ENCODE measurements at regions of chr7 and their contacts with region 1.

Region 1: DNA sequence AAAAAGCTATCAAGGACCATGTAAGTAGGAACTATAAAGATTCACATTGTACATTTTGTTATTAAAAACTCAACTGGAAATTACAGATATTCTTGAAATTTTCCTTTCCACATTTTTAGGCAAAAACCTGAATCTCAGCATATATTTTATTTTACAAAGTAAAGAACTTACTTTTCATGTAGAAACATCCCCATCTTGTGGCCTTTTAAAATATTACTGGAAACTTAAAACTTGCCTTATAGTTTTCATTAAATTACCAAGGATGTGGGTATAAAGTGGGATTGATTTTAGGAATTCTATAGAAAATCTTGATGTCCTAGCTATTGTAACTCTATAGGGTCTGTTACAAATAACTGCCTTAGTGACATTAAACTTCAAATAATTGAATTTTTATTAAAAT is 10.6 kb downstream of the DBF4 start:
- DNase-seq: peak; percentile 56
- ATAC-seq: no peak; the same call in 1 of the 2 replicates
- H3K4me3 ChIP-seq: no peak overlapping the region
- H3K27ac ChIP-seq: no peak overlapping the region
- H3K4me1 ChIP-seq: no peaks in the 10 kb centered on the region
- H3K27me3 ChIP-seq: no peaks in the 10 kb centered on the region
- CTCF ChIP-seq: peak; percentile 59
- POLR2A ChIP-seq: no peak
- RAD21 ChIP-seq: peak; percentile 65

Region 2: GRCh38 chr7:87416682-87417587 is 469.9 kb before region 1 on chr7:
- CTCF ChIA-PET with region 1: interaction called, 3 read pairs
- POLR2A ChIA-PET with region 1: no interaction called
- dilution Hi-C with region 1: no loop called
- in situ Hi-C with region 1: no loop called
- intact Hi-C with region 1: loop called (anchors 5 kb)
- DNase-seq: peak; percentile 69
- ATAC-seq: peak; percentile 22; the same call in 1 of the 2 replicates
- H3K4me3 ChIP-seq: no peak overlapping the region
- H3K27ac ChIP-seq: no peak overlapping the region
- H3K4me1 ChIP-seq: peaks cover 12% of the 10 kb centered on the region
- H3K27me3 ChIP-seq: peaks cover 2% of the 10 kb centered on the region; the same call in 1 of the 2 replicates
- CTCF ChIP-seq: peak; percentile 85
- POLR2A ChIP-seq: no peak
- RAD21 ChIP-seq: peak; percentile 89

Region 3: DNA sequence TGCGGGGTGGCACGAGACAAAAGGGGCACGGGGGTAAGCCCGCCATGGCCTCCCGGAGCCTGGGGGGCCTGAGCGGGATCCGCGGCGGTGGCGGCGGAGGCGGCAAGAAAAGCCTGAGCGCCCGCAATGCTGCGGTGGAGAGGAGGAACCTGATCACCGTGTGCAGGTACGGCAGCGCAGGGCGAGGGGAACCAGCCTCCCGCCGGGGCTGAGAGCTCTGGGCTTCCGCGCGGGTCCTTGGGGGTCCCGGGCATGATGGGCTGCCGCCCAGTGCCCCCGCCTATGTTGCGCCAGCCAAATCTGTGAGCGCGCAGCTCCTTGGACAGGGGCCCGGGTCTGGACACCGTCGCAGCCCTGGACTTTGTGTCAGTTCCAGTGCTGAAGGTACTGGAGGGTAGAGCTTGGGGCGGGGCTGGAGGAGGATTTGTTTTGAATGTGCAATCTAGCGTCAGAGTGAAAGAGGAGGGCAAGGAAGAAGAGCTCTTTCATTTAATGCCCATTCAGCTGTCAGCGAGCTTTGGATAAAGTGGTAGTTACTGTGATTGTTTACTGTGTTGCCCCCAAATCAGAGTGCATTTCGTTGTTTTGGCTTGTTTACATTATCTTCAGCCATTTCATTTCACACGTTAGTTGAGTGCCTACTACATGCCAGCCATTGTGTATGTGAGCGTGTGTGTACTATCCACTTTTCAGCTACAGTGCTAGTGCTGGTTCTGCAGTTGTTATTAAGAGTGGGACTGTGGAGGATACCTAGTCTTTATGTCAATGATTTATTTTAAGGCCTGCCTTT is 257.9 kb before region 1 on chr7:
- CTCF ChIA-PET with region 1: interaction called, 3 read pairs
- POLR2A ChIA-PET with region 1: no interaction called
- dilution Hi-C with region 1: no loop called
- in situ Hi-C with region 1: no loop called
- intact Hi-C with region 1: loop called (anchors 10 kb)
- DNase-seq: no peak
- ATAC-seq: no peak
- H3K4me3 ChIP-seq: peak overlapping the region; percentile 59
- H3K27ac ChIP-seq: no peak overlapping the region
- H3K4me1 ChIP-seq: no peaks in the 10 kb centered on the region; the same call in 1 of the 2 replicates
- H3K27me3 ChIP-seq: peaks cover 3% of the 10 kb centered on the region; the same call in 1 of the 2 replicates
- CTCF ChIP-seq: no peak
- POLR2A ChIP-seq: no peak
- RAD21 ChIP-seq: no peak

Region 4: DNA sequence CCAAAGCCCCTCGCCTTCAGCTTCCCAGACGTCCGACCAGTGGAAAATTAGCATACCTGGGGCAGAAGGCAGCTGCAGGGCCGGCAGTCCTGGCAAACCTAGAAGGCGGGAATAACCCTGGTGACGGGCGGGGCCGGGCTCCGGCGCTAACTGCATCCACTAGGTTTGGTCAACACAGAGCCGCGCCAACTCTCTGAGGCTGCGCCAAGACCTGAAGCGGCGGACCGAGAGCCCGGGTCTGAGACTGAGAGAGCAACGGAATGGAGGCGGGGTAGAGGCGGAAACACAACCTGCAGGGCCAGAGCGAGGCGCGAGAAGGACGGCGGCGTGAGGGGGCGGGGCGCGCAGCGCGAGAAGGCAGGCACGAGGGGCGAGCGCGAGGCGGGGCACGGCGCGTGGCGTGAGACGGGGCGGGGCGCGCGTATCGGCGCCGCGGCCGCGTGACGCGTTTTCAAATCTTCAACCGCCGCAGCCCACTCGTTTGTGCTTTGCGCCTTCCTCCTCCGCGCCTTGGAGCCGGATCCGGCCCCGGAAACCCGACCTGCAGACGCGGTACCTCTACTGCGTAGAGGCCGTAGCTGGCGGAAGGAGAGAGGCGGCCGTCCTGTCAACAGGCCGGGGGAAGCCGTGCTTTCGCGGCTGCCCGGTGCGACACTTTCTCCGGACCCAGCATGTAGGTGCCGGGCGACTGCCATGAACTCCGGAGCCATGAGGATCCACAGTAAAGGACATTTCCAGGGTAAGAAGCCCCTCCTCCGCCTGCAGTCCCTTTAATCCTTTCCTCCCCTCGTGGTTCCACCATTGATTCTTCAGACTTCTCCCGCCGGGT is 10.6 kb before region 1 on chr7 and contains the starts of genes DBF4 and SLC25A40:
- CTCF ChIA-PET with region 1: no interaction called
- POLR2A ChIA-PET with region 1: no interaction called
- dilution Hi-C with region 1: no loop called
- in situ Hi-C with region 1: no loop called
- intact Hi-C with region 1: loop called (anchors 1 kb)
- DNase-seq: peak; percentile 89
- ATAC-seq: peak; percentile 95
- H3K4me3 ChIP-seq: peak within 1 kb of the TSS; percentile 61
- H3K27ac ChIP-seq: peak within 1 kb of the TSS; percentile 39
- H3K4me1 ChIP-seq: no peaks in the 10 kb centered on the region
- H3K27me3 ChIP-seq: no peaks in the 10 kb centered on the region
- CTCF ChIP-seq: no peak
- POLR2A ChIP-seq: peak; percentile 86
- RAD21 ChIP-seq: no peak
- total RNA-seq, gene DBF4: 7.2 and 20.3 TPM in 2 replicates
- total RNA-seq, gene SLC25A40: 4.7 and 8.6 TPM in 2 replicates